H1 (cell line): ENCODE measurements at regions of chr12 and their contacts with region 1.

Region 1: GRCh38 chr12:111775205-111776193 is 8.8 kb downstream of the ALDH2 start:
- DNase-seq: no peak
- H3K4me3 ChIP-seq: no peak overlapping the region
- H3K27ac ChIP-seq: no peak overlapping the region
- H3K4me1 ChIP-seq: peaks cover 0 to 3% (median 0%) of the 10 kb centered on the region in 4 experiments; a peak in 4 of 7 replicates
- H3K27me3 ChIP-seq: no peaks in the 10 kb centered on the region
- CTCF ChIP-seq: no peak
- EP300 ChIP-seq: no peak
- POLR2A ChIP-seq: no peak
- RAD21 ChIP-seq: no peak

Region 2: DNA sequence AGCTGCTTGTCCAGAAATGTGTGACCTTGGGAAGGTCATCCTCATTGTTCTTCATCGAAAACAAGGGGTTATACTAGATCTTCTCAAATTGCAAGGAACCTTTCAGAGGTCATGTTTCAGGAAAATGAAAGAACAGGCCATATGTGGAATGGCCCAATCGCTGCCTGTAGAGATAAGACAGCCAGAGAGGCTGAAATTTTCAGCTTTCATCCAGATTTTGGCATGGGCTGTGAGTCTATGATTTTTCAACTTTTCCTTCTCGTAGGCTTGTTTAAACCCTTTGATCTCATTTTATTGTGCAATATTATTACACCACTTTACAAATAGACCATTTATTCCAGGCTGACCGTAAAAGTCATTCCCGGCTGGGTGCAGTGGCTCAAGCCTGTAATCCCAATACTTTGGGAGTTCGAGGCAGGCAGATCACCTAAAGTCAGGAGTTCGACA is 159.3 kb before region 1 on chr12:
- CTCF ChIA-PET with region 1: no interaction called
- POLR2A ChIA-PET with region 1: no interaction called
- DNase-seq: no peak
- H3K4me3 ChIP-seq: no peak overlapping the region
- H3K27ac ChIP-seq: no peak overlapping the region
- H3K4me1 ChIP-seq: no peaks in the 10 kb centered on the region
- H3K27me3 ChIP-seq: no peaks in the 10 kb centered on the region
- CTCF ChIP-seq: no peak
- EP300 ChIP-seq: no peak
- POLR2A ChIP-seq: no peak
- RAD21 ChIP-seq: no peak

Region 3: DNA sequence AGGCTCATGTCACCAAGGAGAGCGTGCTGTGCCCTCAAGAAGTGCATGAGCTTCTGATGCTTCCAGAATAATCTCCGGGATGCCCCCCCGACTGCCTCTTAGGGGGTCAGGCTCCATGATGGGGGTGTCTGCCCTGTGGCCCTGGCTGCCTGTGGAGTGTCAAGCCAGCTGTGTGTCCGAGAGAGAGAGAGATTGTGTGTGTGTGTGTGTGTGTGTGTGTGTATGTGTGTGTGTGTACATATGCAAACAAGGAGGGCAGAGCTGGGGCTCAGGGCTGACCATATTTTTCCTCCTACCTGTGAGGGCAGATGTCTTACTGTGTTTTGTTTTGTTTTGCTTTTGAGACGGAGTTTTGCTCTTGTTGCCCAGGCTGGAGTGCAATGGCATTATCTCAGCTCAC is 14.4 kb before region 1 on chr12:
- CTCF ChIA-PET with region 1: interaction called, 7 read pairs
- POLR2A ChIA-PET with region 1: interaction called, 18 read pairs
- DNase-seq: no peak
- H3K4me3 ChIP-seq: no peak overlapping the region
- H3K27ac ChIP-seq: no peak overlapping the region
- H3K4me1 ChIP-seq: peaks cover 0 to 11% (median 8%) of the 10 kb centered on the region in 4 experiments; a peak in 3 of 7 replicates
- H3K27me3 ChIP-seq: peaks cover 0 to 3% (median 0%) of the 10 kb centered on the region in 4 experiments; a peak in 3 of 7 replicates
- CTCF ChIP-seq: no peak
- EP300 ChIP-seq: no peak
- POLR2A ChIP-seq: no peak
- RAD21 ChIP-seq: no peak